AG04449 (cell line): ENCODE measurements at regions of chr5 and their contacts with region 1.

Region 1: GRCh38 chr5:10856683-10857337 is 95.8 kb upstream of the DAP start:
- DNase-seq: peak; percentile 52
- H3K4me3 ChIP-seq: peak overlapping the region; percentile 16
- CTCF ChIP-seq: peak; percentile 93

Region 2: DNA sequence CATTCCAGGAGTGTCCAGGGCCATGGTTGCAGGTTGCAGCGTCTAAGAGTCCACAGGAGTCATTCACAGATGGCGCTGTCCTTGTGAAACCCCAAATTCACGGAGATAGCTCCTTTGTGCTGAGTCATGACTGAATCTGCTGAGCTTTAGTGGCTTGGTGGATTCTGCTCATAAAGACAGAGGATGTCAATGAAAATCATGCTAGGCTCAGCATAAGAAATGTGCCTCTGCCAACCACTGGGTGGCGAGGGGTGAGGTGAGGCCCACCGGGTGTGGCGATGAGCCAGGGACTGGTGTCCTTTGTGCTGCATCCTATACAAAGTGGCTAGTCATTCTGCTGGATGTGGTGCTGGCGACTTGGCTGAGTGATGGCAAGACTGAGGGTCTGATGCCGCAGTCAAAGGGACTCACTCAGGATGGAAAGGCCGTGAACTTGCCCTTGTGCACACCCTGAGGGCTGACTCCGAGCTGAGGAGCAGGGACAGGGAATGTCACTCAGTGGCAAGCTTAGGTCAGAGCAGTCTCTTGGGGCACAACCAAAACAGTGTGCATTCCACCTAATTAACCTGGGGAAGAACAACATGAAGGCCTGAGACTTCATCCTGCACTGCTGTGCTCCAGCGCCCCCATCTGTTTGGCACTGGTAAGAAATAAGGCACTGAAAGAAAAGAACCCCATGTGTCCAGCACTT is 167.3 kb before region 1 on chr5:
- CTCF ChIA-PET with region 1: interaction called, 13 read pairs
- POLR2A ChIA-PET with region 1: no interaction called
- DNase-seq: no peak
- H3K4me3 ChIP-seq: no peak overlapping the region
- CTCF ChIP-seq: peak; percentile 24

Region 3: DNA sequence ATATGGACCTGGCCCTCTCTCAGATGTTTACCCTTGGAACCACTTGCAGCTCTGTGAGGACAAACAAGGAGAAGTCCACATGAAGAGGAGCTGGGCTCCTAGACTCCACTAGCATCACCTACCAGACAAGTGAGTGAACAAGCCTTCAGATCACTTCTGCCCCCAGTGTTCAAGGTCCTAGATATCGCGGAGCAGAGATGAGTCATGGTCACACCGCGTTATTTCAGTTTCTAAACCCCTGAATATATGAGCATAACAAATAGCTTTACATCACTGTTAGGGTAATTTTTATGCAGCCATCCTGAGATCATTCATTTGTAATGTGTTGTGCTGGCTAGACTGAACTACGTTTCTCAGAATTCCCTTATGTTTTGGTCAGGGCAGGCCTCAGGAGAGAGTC is 18.8 kb before region 1 on chr5:
- CTCF ChIA-PET with region 1: interaction called, 142 read pairs
- POLR2A ChIA-PET with region 1: interaction called, 3 read pairs
- DNase-seq: no peak
- H3K4me3 ChIP-seq: no peak overlapping the region
- CTCF ChIP-seq: no peak

Region 4: GRCh38 chr5:10876006-10876744 is 19.4 kb after region 1 on chr5:
- CTCF ChIA-PET with region 1: interaction called, 67 read pairs
- POLR2A ChIA-PET with region 1: no interaction called
- DNase-seq: no peak
- H3K4me3 ChIP-seq: no peak overlapping the region
- CTCF ChIP-seq: no peak